B cell (primary cell): ENCODE measurements at regions of chr17 and their contacts with region 1.

Region 1: GRCh38 chr17:42342242-42343008 is 45.8 kb downstream of the STAT3 start:
- DNase-seq: no peak
- ATAC-seq: no peak
- H3K4me3 ChIP-seq: no peak overlapping the region
- H3K4me3 Mint-ChIP-seq: peak overlapping the region; percentile 7
- H3K27ac ChIP-seq: no peak overlapping the region
- H3K27ac Mint-ChIP-seq: peak overlapping the region; percentile 33
- H3K4me1 ChIP-seq: peaks cover 0 to 6% of the 10 kb centered on the region in 2 donors
- H3K4me1 Mint-ChIP-seq: peaks cover 34% of the 10 kb centered on the region
- H3K27me3 ChIP-seq: no peaks in the 10 kb centered on the region
- H3K27me3 Mint-ChIP-seq: no peaks in the 10 kb centered on the region
- CTCF ChIP-seq: no peak

Region 2: DNA sequence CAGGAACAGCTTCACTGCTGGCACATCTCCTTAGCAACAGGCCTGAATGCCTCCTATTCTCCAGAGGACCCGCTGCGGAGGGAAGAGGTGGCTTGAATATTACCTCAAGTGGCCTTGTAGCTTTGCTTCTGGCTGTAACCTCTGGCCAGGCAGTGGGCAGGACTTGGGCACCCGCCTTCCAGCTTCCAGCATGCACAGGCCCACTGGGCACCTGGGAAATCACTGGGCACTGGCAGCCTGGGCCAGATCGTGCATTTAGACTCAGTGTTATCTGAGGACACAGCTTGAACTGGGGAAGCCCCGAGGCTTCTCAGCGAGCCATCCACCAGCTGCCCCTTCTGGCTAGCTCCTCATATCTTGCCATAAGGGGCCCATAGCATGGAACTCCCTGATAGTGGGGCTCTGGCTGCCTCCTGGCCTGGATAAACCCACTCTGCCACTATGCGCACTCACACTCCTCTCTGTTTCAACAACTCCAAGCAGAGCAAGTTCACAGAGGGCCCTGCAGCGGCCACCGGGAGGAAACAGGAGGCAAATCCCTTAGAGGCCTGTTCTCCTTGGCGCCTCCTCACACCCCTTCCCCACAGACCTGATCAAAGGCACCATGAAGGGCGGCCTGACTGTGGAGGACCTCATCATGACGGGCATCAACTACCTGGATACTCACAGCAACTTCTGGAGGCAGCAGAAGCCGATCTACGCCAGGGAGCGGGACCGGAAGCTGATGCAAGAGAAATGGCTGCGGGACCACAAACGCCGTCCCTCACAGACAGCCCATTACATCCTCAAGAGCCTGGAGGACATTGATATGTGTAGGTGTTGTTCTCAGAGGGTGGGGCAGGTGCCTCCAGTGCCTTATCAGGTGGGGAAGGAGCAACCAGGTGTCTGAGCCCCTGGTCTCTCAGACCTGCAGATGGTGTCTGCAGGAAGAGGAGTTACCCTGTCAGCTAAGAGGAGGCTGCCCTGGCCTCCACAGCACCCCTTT is 404.2 kb before region 1 on chr17:
- CTCF ChIA-PET with region 1: no interaction called
- POLR2A ChIA-PET with region 1: no interaction called
- intact Hi-C with region 1: no loop called
- DNase-seq: no peak
- ATAC-seq: no peak
- H3K4me3 ChIP-seq: no peak overlapping the region
- H3K4me3 Mint-ChIP-seq: no peak overlapping the region
- H3K27ac ChIP-seq: no peak overlapping the region
- H3K27ac Mint-ChIP-seq: no peak overlapping the region
- H3K4me1 ChIP-seq: no peaks in the 10 kb centered on the region
- H3K4me1 Mint-ChIP-seq: no peaks in the 10 kb centered on the region
- H3K27me3 ChIP-seq: no peaks in the 10 kb centered on the region
- H3K27me3 Mint-ChIP-seq: peaks cover 3% of the 10 kb centered on the region
- CTCF ChIP-seq: no peak

Region 3: GRCh38 chr17:42378597-42379594 is 36.5 kb after region 1 on chr17:
- CTCF ChIA-PET with region 1: interaction called, 3 read pairs
- POLR2A ChIA-PET with region 1: no interaction called
- intact Hi-C with region 1: loop called (anchors 5 kb)
- DNase-seq: peak; percentile 54
- ATAC-seq: peak; percentile 76
- H3K4me3 ChIP-seq: peak overlapping the region in 4 of 5 experiments; percentile 17 to 55 (median 34)
- H3K4me3 Mint-ChIP-seq: peak overlapping the region; percentile 86
- H3K27ac ChIP-seq: peak overlapping the region; percentile 38 to 73
- H3K27ac Mint-ChIP-seq: peak overlapping the region; percentile 81
- H3K4me1 ChIP-seq: peaks cover 17 to 25% of the 10 kb centered on the region in 2 donors
- H3K4me1 Mint-ChIP-seq: peaks cover 63% of the 10 kb centered on the region
- H3K27me3 ChIP-seq: no peaks in the 10 kb centered on the region
- H3K27me3 Mint-ChIP-seq: no peaks in the 10 kb centered on the region
- CTCF ChIP-seq: no peak